Sigmoid colon (tissue), 7 donors: ENCODE measurements at regions of chr7 and their contacts with region 1.

Region 1: GRCh38 chr7:149873074-149873969 is at the start of gene ATP6V0E2:
- DNase-seq: peak; percentile 98
- H3K4me3 ChIP-seq: peak within 1 kb of the TSS; percentile 73 to 93 (median 82)
- H3K27ac ChIP-seq: peak within 1 kb of the TSS; percentile 94 to 99 (median 98)
- H3K4me1 ChIP-seq: peaks cover 0 to 24% (median 17%) of the 10 kb centered on the region in 4 donors
- H3K27me3 ChIP-seq: no peaks in the 10 kb centered on the region
- CTCF ChIP-seq: no peak
- EP300 ChIP-seq: no peak
- POLR2A ChIP-seq: peak in 1 of 2 donors; percentile 51
- total RNA-seq, gene ATP6V0E2: 16.6 to 41.7 (median 29.9) TPM

Region 2: DNA sequence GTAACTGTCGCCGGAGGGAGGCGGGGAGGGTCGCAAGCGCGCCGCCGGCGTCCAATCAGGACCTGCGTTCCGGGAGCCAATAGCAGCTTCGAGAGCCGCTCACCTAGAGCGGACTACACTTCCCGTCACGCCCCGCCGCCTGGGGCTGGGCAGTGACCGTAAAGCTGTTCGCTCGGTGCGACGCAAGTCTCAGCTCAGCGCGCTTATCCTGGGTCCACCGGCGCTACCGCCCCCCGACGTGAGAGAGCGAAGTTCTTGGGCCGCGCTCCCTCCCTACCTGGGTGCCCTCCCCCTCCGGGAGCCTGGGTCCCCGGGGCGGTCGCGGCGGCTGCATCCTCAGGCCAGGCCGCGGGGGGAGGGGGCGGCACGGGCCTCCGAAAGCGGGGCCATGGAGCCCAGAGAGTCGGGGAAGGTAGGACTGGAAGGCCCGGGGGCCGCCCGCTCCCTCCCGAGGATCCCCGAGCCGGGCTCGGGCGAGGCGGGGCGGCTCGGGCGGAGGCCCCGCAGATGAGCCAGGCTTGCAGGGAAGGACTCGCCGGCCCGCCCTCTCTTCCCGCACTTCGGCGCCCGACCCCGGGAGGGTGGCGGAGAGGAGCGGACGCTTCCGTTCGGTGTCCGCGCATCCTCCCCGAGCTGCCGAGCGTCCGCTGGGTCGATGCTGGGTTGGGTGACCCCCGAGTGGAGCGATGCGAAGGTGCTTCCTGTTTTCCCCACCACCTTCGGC is 34.9 kb before region 1 on chr7 and contains the start of gene ZNF862:
- intact Hi-C with region 1: loop called (anchors 2 kb)
- DNase-seq: peak; percentile 99
- H3K4me3 ChIP-seq: peak within 1 kb of the TSS; percentile 74 to 100 (median 96)
- H3K27ac ChIP-seq: peak within 1 kb of the TSS; percentile 89 to 98 (median 98)
- H3K4me1 ChIP-seq: peaks cover 0 to 15% (median 9%) of the 10 kb centered on the region in 4 donors
- H3K27me3 ChIP-seq: no peaks in the 10 kb centered on the region
- CTCF ChIP-seq: no peak
- EP300 ChIP-seq: no peak
- POLR2A ChIP-seq: peak; percentile 51 to 57
- total RNA-seq, gene ZNF862: 12.5 to 23.8 (median 15.9) TPM

Region 3: DNA sequence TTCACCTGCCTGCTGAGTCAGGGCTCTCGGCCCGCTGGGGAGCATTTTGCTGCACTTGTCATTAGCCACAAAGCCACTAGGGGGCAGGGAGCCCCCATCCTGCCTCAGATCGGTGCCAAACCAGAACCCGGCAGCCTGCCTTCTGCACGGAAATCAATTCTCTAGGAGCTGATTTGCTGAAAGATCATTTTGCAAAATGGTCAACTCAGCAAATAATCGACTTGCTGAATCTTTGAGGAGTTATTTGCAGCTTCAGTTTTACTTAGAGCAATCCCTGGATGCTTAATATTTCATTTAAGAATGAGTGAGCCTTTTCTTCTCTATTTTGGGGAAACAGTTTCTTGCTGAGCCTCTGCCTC is 575.4 kb after region 1 on chr7:
- intact Hi-C with region 1: no loop called
- DNase-seq: peak; percentile 80
- H3K4me3 ChIP-seq: no peak overlapping the region
- H3K27ac ChIP-seq: peak overlapping the region in 2 of 4 donors; percentile 63 to 77
- H3K4me1 ChIP-seq: peaks cover 0 to 19% (median 1%) of the 10 kb centered on the region in 4 donors
- H3K27me3 ChIP-seq: peaks cover 2 to 21% (median 10%) of the 10 kb centered on the region in 3 donors
- CTCF ChIP-seq: peak; percentile 16 to 80 (median 72)
- EP300 ChIP-seq: no peak
- POLR2A ChIP-seq: no peak